Head of caudate nucleus (tissue), 42 donors: ENCODE measurements at regions of chr15 and their contacts with region 1.

Region 1: DNA sequence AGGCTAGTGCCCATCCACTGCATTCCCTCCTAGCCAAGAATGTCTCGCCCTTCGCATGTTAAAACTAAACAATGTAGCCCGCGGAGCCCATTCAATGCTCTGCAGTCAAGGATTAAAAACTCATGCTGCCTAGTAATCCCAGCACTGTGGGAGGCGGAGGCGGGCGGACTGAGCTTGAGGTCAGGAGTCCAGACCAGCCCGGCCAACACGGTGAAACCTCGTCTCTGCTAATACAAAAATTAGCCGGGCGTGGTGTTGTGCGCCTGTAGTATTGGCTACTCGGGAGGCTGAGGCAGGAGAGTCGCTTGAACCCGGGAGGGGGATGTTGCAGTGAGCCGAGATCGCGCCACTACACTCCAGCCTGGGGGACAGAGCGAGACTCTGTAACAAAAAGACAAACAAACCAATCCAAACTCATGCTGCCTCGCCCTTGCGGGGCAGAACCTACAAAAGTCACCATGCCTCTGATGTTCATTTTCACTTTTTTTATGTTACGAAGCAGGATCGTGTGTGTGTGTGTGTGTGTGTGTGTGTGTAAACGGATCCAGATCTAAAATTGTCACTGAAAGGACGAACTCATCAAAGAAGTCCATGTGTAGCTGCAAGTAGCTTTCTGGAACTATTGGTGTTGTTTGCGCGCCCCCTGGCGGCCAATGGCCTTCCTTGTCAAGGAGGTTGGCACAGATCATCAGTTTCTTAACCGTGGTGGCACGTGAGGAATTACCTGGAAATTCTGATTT is 54.8 kb upstream of the SPESP1 start:
- DNase-seq: peak; percentile 83 to 98 (median 94)

Region 2: DNA sequence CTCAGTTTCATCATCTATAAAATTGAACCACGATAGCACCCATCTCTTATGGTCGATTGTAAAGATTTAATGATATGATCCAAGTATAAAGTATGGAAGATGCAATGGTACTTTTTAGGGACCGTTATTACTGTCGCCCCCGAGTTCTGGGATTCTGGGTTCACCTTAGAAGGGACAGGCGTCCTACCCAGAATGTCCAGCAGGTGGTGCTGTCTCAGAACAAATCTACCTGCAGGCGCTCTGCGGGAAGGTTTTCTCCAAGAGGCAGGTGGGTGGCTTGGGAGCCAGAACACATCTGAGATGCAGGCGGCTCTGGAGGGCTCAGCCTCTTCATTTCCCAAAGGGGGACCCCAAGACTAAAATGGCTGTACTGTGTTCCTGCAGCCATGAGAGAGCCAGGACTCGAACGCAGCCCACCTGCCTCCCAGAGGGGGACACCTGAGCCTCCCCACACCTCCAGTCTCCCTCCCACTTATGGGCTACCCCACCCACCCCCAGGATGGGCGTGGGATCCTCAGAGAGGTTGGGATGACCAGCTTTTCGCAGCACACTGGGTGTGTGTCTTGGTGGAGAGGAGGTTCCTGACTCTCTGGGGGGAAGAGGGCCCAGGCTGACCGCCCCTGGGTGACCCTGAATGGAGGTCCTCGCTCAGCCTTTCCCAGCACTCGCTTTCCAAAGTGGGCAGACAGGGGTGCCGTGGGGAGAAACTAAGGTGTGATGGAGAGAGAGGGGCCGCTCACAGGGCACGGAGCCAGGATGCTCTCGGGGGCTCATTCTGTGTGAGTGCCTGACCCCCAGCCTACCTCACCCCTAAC is 324.9 kb before region 1 on chr15:
- intact Hi-C with region 1: loop called (anchors 5 kb)
- DNase-seq: peak; percentile 72 to 96 (median 90)

Region 3: GRCh38 chr15:68672781-68673205 is 202.8 kb before region 1 on chr15:
- intact Hi-C with region 1: loop called (anchors 10 kb)
- DNase-seq: peak in 17 of 42 donors; percentile 12 to 63 (median 42)

Region 4: GRCh38 chr15:68730471-68730919 is 145.1 kb before region 1 on chr15:
- intact Hi-C with region 1: loop called (anchors 5 kb)
- DNase-seq: peak in 40 of 42 donors; percentile 30 to 85 (median 66)

Region 5: GRCh38 chr15:68820295-68821189 is 55.0 kb before region 1 on chr15 and contains the start of gene ANP32A:
- intact Hi-C with region 1: loop called (anchors 10 kb)
- DNase-seq: peak; percentile 89 to 99 (median 96)

Region 6: GRCh38 chr15:69014454-69014853 is 138.9 kb after region 1 on chr15 and contains the start of gene NOX5:
- intact Hi-C with region 1: no loop called
- DNase-seq: no peak